ENCODE measurements at regions of chr5 and their contacts with region 1.

Region 1: GRCh38 chr5:139765409-139766217 is 30.0 kb upstream of the PSD2 start:
- DNase-seq: peak; percentile 86
- ATAC-seq: peak; percentile 91
- H3K4me3 Mint-ChIP-seq: peak overlapping the region; percentile 71
- H3K27ac Mint-ChIP-seq: no peak overlapping the region
- H3K4me1 Mint-ChIP-seq: peaks cover 16% of the 10 kb centered on the region
- H3K27me3 Mint-ChIP-seq: peaks cover 28% of the 10 kb centered on the region

Region 2: DNA sequence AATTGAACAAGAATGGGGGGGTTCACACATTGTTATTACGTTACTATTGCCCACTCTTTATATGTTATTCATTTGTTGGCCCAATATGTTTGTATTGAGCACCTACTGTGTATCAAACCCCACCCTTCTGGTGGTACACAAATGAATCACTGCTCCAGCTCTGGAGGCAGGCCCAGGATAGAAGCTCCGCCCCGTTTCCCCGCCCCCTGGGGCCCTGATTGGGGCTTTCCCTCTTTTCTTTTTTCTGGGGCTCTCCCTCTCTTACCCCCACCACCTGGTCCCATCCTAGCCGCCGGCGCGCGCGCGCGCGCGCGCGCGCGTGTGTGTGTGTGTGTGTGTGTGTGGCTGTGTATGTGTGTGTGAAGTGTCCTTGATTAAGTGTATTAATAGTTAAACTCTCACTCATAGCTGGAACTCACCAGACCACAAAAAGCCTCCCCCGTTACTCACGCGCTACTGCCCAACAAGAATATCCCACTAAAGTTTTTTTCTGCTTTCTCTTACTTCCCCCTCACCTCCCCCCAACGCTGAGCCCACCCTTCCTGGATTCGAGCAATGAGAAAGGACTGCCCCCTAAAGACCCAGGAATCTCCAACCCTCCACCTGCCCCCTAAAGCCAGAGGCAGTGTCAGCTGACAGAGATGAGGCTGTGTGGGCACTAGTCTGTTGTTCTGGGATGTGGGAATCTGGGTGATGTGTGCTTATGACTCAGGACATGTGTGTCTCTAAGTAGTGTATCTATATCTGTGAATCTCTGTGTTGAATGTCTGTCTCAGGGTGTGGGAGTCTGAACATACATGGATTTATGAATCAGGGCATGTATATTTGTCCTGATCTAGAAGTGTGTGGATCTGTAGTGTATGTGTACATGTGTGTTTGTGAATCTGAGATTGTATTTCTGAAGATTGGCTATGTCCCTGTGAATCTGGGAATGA is 113.5 kb before region 1 on chr5:
- CTCF ChIA-PET with region 1: interaction called, 17 read pairs
- POLR2A ChIA-PET with region 1: no interaction called
- DNase-seq: peak; percentile 76
- ATAC-seq: peak; percentile 46
- H3K4me3 Mint-ChIP-seq: no peak overlapping the region
- H3K27ac Mint-ChIP-seq: peak overlapping the region; percentile 31
- H3K4me1 Mint-ChIP-seq: peaks cover 54% of the 10 kb centered on the region
- H3K27me3 Mint-ChIP-seq: peaks cover 41% of the 10 kb centered on the region

Region 3: GRCh38 chr5:139690064-139690802 is 75.4 kb before region 1 on chr5:
- CTCF ChIA-PET with region 1: interaction called, 10 read pairs
- POLR2A ChIA-PET with region 1: no interaction called
- DNase-seq: peak; percentile 48
- ATAC-seq: no peak
- H3K4me3 Mint-ChIP-seq: no peak overlapping the region
- H3K27ac Mint-ChIP-seq: no peak overlapping the region
- H3K4me1 Mint-ChIP-seq: peaks cover 6% of the 10 kb centered on the region
- H3K27me3 Mint-ChIP-seq: no peaks in the 10 kb centered on the region

Region 4: GRCh38 chr5:139745800-139746690 is 19.6 kb before region 1 on chr5:
- CTCF ChIA-PET with region 1: interaction called, 25 read pairs
- POLR2A ChIA-PET with region 1: interaction called, 3 read pairs
- DNase-seq: peak; percentile 48
- ATAC-seq: peak; percentile 42
- H3K4me3 Mint-ChIP-seq: peak overlapping the region; percentile 69
- H3K27ac Mint-ChIP-seq: no peak overlapping the region
- H3K4me1 Mint-ChIP-seq: peaks cover 24% of the 10 kb centered on the region
- H3K27me3 Mint-ChIP-seq: peaks cover 36% of the 10 kb centered on the region